ENCODE measurements at regions of chr6 and their contacts with region 1.

Region 1: DNA sequence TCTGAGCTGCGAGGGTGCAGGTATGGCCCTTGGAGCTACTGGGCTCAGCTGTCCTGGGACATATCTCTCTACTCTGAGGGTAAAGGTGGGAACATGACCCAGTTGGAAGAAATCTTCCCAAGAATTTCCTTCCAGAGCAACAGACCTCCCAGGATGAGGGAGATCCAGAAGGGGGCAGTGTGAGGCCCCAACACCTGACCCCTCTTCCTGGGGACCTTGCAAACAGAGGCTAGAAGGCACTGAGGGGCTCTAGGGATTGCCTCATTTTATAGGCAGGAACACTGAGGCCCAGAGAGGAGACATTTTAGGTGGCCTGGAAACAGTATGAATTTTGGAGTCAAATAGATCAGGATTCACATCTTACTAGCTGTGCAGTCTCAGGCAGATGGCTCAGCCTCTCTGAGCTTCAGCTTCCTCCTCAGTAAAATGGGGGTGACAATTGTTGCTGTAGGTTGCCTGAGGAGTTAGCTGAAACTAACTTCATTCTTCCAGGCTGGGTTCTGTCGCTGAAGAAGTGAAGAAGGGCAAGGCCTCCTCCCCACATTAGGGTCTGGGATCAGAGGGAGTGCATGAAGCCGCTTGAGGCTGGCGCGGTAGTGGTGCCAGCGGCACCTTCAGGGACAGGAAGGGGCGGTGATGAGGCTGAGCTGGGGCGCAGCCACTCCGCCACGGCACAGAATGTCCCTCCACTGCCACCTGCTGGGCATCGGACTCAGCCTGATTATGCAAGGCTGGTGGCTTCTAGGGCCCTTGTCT is 11.4 kb downstream of the KCNK17 start:
- DNase-seq: peak; percentile 84 to 95 (median 93)
- ATAC-seq: peak; percentile 86 to 91
- H3K4me3 ChIP-seq: no peak overlapping the region
- H3K27ac ChIP-seq: no peak overlapping the region
- H3K4me1 ChIP-seq: no peaks in the 10 kb centered on the region
- H3K27me3 ChIP-seq: no peaks in the 10 kb centered on the region

Region 2: DNA sequence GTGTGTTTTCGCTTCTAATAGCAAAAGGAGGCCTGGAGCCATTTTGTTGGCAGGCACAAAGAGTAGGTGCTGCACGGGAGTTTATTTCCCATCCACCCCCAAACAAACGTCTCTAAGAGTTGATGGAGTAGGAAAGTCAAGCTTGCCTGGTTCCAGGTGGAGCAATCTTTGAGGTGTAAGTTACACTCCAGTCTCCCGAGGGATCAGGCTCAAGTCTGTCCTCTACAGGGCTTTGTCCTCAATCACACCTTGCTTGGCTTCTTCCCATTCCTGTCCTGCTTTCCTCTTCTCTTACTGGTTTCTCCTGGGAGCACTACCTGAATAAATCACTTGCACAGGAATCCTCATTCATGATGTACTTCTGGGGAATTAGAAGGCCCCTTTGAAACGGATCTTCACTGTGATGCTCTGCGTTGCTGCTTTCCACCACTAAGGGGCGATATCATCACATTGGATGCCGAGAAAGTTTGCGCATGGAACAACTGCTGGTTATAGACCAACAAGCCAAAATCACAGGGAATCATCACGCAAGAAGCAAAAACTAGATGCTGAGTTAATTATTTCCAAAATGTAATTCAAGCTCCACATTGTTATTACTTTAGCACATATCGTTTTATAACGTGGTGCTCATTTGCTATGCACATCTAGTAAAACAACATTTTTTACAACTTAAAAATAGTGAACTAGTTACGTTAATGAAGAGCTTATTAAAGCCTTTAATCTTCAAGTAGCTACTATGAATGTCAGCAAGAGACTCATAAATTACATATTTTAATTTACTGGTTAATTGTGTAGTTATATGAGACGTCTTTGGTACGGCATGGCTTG is 430.9 kb before region 1 on chr6:
- intact Hi-C with region 1: loop called in 3 of 4 experiments (anchors 5 to 10 kb)
- DNase-seq: peak in 2 of 3 donors; percentile 20 to 61
- ATAC-seq: peak; percentile 49 to 60
- H3K4me3 ChIP-seq: no peak overlapping the region
- H3K27ac ChIP-seq: no peak overlapping the region
- H3K4me1 ChIP-seq: no peaks in the 10 kb centered on the region
- H3K27me3 ChIP-seq: peaks cover 2% of the 10 kb centered on the region

Region 3: DNA sequence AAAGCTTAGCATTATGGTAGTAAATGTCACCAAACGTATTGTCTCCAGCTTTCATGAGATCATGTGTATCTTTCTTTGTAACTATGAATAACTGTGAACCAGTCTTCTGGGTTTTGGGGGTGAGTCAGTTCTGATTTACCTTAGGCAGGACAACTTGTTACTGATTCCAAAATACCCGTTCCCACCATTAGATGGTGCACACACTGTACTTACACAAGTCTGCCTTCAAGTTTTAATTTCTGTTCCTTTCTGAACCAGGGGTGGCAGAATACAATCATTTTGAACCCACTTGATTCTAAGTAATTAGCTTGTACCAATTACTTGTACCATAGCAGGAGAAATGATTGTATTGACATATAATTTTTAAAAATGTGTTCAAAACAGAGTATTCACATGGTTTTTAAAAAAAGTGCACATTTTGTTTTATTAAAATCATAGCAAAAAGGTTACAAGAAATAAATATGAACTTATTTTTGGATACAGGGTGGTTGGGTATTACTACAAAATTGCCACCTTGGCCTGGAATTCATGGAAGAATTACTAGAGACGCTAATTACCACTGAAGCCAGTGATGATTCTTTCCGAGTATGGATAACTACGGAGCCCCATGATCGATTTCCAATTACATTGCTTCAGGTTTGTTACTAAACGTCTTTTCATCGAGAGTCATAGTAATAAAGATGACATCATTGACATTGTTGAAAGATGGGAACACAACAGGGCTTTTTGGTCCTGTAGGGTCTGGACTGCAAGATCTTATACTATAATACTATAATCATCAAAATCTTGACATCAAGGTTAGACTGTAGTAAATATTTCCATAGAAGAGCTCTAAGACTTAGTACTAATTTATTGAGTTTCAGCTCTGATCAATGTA is 329.4 kb before region 1 on chr6:
- intact Hi-C with region 1: loop called in 3 of 4 experiments (anchors 5 kb)
- DNase-seq: no peak
- ATAC-seq: peak; percentile 62 to 71
- H3K4me3 ChIP-seq: no peak overlapping the region
- H3K27ac ChIP-seq: no peak overlapping the region
- H3K4me1 ChIP-seq: no peaks in the 10 kb centered on the region
- H3K27me3 ChIP-seq: no peaks in the 10 kb centered on the region

Region 4: GRCh38 chr6:39088331-39088730 is 214.5 kb before region 1 on chr6:
- intact Hi-C with region 1: loop called in 2 of 4 experiments (anchors 10 kb)
- DNase-seq: peak; percentile 40 to 68 (median 59)
- ATAC-seq: peak; percentile 72 to 83
- H3K4me3 ChIP-seq: no peak overlapping the region
- H3K27ac ChIP-seq: no peak overlapping the region
- H3K4me1 ChIP-seq: peaks cover 5% of the 10 kb centered on the region
- H3K27me3 ChIP-seq: no peaks in the 10 kb centered on the region

Region 5: DNA sequence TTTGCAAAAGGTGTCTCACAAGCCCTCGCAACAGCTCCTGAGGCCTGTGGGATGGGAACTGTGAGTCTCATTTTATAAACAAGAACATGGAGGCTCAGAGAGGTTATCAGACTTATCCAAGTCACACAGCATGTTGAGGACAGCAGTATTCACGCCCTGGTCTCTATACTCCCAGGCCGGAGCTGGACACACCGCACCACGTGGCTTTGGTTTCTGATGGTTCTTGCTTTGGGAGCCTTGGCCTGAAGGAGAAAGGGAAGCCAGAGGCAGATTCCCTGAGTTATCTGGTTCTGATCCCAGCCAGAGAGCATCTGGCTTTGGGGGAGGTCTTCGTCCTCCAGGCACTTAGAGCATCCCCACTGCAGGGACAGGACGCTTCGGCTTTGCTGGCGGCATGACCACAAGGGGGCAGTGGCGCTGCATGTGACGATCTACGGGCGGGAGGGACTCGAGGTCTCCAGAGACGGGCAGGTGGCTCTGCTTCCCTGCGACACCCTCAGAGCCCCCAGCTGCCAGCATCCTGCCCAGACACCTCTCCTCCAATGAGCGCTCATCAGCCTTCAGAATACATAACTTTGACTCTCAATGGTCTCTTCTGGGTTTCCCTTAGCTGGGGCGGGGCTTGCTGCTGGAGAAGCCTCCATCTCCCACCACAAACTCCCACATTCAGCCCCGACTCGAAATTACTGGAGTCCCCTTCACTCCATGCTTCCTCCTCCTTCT is 136.5 kb before region 1 on chr6:
- intact Hi-C with region 1: loop called (anchors 2 to 5 kb)
- DNase-seq: peak; percentile 76 to 91 (median 91)
- ATAC-seq: peak; percentile 79 to 85
- H3K4me3 ChIP-seq: no peak overlapping the region
- H3K27ac ChIP-seq: no peak overlapping the region
- H3K4me1 ChIP-seq: no peaks in the 10 kb centered on the region
- H3K27me3 ChIP-seq: no peaks in the 10 kb centered on the region

Measured in right cardiac atrium (tissue), 5 donors.